ENCODE measurements at regions of chr9 and their contacts with region 1.

Region 1: GRCh38 chr9:132240753-132241493 is 79.1 kb downstream of the NTNG2 start:
- DNase-seq: peak; percentile 92
- H3K4me3 ChIP-seq: peak overlapping the region; percentile 41 to 63 (median 54)
- H3K27ac ChIP-seq: no peak overlapping the region
- H3K4me1 ChIP-seq: peaks cover 7% of the 10 kb centered on the region
- H3K27me3 ChIP-seq: peaks cover 4 to 5% of the 10 kb centered on the region in 2 experiments
- CTCF ChIP-seq: no peak
- POLR2A ChIP-seq: no peak

Region 2: DNA sequence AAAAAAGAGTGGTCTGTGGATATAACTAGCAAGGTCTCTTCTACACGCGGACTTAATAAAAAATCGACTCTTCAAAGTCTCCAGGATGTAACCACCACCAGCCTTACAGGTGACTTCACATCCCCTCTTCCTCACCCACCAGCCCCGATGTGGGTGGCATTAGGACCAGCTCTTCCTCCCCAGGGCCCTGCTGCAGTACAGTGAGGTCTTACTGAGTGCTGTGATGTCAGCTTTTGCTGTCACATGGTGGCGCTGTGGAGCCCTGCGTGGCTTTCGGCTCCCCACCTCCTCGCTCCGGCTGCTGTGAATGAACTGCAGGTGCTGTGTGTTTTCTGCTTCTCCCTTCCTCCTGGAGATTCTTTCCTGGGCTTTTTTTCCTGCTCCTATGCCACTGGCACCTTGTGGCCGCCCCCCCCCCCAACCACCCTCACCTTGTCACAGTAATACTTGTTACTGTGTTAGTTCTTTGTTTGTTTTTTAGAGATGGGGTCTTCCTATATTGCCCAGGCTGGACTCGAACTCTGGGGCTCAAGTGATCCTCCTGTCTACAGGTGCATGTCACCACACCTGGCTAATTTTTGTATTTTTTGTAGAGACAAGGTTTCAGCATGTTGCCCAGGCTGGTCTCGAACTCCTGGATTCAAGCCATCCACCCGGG is 485.3 kb before region 1 on chr9:
- CTCF ChIA-PET with region 1: interaction called, 234 read pairs
- POLR2A ChIA-PET with region 1: no interaction called
- dilution Hi-C with region 1: no loop called
- intact Hi-C with region 1: no loop called
- DNase-seq: peak; percentile 83
- H3K4me3 ChIP-seq: no peak overlapping the region
- H3K27ac ChIP-seq: no peak overlapping the region
- H3K4me1 ChIP-seq: no peaks in the 10 kb centered on the region
- H3K27me3 ChIP-seq: peaks cover 13 to 14% of the 10 kb centered on the region in 2 experiments
- CTCF ChIP-seq: peak; percentile 78 to 91
- POLR2A ChIP-seq: no peak

Region 3: DNA sequence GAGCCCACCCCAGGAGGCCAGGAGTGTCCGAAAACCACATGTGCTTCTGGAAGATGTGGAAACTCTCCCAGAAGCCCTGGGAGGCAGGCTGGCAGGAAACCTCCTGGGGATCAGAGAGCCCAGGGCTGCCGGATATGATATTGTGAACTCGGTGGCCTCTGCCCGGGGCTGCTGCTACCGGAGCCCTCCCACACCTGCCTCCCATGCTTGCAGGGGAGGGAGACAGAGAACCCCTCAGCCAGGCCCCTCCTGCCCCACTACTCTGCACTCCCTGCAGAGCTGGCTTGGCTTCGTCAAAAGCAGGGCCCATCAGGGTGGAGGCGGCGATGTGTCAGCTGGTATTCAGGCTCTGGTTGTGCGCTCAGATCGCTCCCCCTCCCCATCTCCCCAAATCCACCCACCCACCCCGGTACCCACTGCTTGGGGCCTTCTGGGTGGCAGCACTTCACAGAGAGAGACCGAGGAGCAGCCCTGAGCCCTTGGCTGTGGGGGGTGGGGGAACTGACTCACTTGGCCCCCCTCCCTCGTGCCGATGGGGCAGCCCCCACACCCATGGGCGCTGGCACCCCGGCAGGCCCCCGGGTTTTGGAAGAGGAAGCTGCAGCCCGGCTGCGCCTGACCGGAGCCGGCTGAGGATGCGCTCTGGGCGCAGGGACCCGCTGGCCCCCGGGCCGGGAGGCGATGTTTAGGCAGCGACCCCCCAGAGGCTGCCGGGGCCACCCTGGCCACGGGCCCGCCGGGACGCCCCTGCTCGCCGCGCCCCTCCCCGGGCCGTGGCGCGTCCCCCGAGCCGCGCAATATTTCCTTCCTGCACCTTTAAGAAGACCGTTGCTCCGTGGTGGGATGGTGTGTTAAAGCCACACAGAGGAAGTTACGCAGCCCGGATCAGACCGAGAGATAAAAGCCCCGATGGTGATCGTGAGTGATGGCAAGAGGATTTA is 79.9 kb before region 1 on chr9:
- CTCF ChIA-PET with region 1: interaction called, 408 read pairs
- POLR2A ChIA-PET with region 1: no interaction called
- dilution Hi-C with region 1: no loop called
- intact Hi-C with region 1: no loop called
- DNase-seq: peak; percentile 16
- H3K4me3 ChIP-seq: peak overlapping the region; percentile 51 to 63 (median 55)
- H3K27ac ChIP-seq: no peak overlapping the region
- H3K4me1 ChIP-seq: peaks cover 10% of the 10 kb centered on the region
- H3K27me3 ChIP-seq: peaks cover 55 to 71% of the 10 kb centered on the region in 2 experiments
- CTCF ChIP-seq: no peak
- POLR2A ChIP-seq: no peak

Region 4: GRCh38 chr9:132182314-132183091 is 58.4 kb before region 1 on chr9:
- CTCF ChIA-PET with region 1: interaction called, 15 read pairs
- POLR2A ChIA-PET with region 1: no interaction called
- dilution Hi-C with region 1: no loop called
- intact Hi-C with region 1: no loop called
- DNase-seq: no peak
- H3K4me3 ChIP-seq: no peak overlapping the region
- H3K27ac ChIP-seq: no peak overlapping the region
- H3K4me1 ChIP-seq: no peaks in the 10 kb centered on the region
- H3K27me3 ChIP-seq: peaks cover 19 to 21% of the 10 kb centered on the region in 2 experiments
- CTCF ChIP-seq: peak in 1 of 2 donors; percentile 22
- POLR2A ChIP-seq: no peak